Panc1 (cell line): ENCODE measurements at regions of chr16 and their contacts with region 1.

Region 1: GRCh38 chr16:14529010-14529669 is 100.9 kb downstream of the PARN start:
- DNase-seq: peak; percentile 87
- ATAC-seq: peak; percentile 91
- H3K4me3 ChIP-seq: no peak overlapping the region
- H3K27ac ChIP-seq: peak overlapping the region; percentile 72
- H3K4me1 ChIP-seq: peaks cover 8% of the 10 kb centered on the region
- H3K27me3 ChIP-seq: no peaks in the 10 kb centered on the region
- CTCF ChIP-seq: peak; percentile 87

Region 2: DNA sequence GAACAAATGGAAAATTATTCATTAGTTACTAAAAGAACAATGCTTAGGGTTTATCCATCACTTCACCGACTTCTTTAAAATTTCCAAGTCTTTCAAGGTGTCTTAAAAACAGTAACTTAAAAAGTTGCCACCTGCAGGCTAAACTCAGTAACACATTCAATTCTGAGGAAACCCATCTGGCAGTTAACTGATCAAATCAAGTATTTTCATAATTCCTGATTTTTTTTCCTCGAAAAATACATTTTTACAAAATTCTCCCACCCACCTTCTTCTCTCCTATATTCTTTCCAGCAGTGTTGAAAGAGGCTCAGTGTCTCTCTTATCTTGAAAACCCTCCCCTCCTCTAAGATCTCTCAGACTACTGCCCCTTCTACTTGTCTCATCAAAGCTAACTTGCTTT is 71.0 kb after region 1 on chr16:
- CTCF ChIA-PET with region 1: interaction called, 13 read pairs
- POLR2A ChIA-PET with region 1: no interaction called
- in situ Hi-C with region 1: no loop called
- intact Hi-C with region 1: no loop called
- DNase-seq: peak; percentile 17
- ATAC-seq: peak; percentile 65; the same call in 1 of the 2 replicates
- H3K4me3 ChIP-seq: no peak overlapping the region
- H3K27ac ChIP-seq: no peak overlapping the region
- H3K4me1 ChIP-seq: no peaks in the 10 kb centered on the region
- H3K27me3 ChIP-seq: no peaks in the 10 kb centered on the region
- CTCF ChIP-seq: no peak

Region 3: DNA sequence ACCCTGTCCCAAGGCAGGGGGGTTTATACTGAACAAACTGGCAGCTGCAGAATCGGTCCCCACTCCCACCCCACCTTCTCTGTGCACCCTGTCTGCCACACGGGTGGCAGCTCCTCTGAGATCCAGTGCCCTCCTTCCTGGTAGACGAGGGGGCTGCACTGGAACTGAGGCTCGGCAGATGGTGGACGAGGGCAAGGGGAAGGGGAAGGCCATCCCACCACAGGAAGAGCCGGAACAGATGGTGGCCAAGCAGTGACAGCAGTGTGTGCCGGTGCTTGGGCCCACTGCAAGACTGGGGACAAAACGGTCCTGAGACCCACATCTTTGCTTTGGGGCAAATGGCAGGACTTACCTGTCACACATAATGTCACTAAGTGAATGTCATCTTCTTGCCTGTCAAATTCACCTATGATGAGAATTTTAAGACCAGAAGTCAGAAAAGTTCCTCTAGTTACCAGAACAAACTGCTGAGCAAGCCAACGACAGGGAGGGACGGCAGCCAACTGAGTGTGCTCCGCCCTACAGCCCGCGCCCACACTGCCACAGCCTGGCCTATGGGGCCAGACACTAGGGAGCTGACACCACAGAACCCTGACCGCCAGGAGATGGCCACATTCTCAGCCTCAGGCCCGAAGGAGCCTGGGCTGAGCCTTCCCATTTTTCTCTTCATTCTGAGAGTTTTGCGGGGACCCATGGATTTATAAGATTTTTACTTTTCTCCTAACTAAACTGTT is 512.3 kb after region 1 on chr16:
- CTCF ChIA-PET with region 1: no interaction called
- POLR2A ChIA-PET with region 1: no interaction called
- in situ Hi-C with region 1: no loop called
- intact Hi-C with region 1: no loop called
- DNase-seq: no peak
- ATAC-seq: peak; percentile 72
- H3K4me3 ChIP-seq: no peak overlapping the region
- H3K27ac ChIP-seq: no peak overlapping the region
- H3K4me1 ChIP-seq: no peaks in the 10 kb centered on the region
- H3K27me3 ChIP-seq: no peaks in the 10 kb centered on the region
- CTCF ChIP-seq: no peak